ENCODE measurements at regions of chr16 and their contacts with region 1.

Region 1: DNA sequence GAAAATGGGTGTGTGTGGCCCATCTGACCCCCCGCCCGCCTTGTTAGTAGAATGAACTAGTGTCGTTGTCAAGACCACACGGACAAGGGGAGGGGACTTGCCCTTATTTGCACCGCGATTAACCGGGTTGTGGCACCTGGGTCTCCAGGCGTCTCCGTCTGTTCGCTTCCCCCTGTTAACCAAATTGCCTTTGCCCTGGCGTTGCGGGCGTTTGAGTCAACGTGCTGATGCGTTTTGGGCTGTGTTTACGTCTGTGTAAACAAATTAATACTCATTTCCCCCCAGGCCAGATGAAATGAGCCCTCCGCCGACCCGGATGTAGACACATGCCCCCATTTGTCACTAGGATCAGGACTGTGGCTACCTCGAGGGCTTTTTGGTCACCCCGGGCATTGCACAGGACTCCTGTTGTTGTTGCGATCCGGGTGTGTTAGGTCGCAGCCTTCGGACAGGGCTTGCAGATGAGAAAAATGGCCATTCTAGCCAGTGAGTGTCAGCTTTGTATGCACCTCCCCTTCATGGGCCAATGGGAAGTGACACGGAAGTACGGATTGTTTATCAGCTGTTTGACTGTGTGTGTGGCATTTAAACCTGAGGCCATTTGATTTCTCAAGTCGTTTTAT is 906 bp downstream of the RBL2 start:
- DNase-seq: peak; percentile 81
- ATAC-seq: peak; percentile 77
- H3K4me3 Mint-ChIP-seq: peak overlapping the region; percentile 96
- H3K27ac Mint-ChIP-seq: peak overlapping the region; percentile 95
- H3K4me1 Mint-ChIP-seq: peaks cover 45% of the 10 kb centered on the region
- H3K27me3 Mint-ChIP-seq: no peaks in the 10 kb centered on the region

Region 2: GRCh38 chr16:53449632-53450517 is 14.7 kb after region 1 on chr16:
- CTCF ChIA-PET with region 1: interaction called, 37 read pairs
- POLR2A ChIA-PET with region 1: interaction called, 101 read pairs
- DNase-seq: no peak
- ATAC-seq: no peak
- H3K4me3 Mint-ChIP-seq: peak overlapping the region; percentile 67
- H3K27ac Mint-ChIP-seq: peak overlapping the region; percentile 72
- H3K4me1 Mint-ChIP-seq: peaks cover 57% of the 10 kb centered on the region
- H3K27me3 Mint-ChIP-seq: no peaks in the 10 kb centered on the region

Region 3: DNA sequence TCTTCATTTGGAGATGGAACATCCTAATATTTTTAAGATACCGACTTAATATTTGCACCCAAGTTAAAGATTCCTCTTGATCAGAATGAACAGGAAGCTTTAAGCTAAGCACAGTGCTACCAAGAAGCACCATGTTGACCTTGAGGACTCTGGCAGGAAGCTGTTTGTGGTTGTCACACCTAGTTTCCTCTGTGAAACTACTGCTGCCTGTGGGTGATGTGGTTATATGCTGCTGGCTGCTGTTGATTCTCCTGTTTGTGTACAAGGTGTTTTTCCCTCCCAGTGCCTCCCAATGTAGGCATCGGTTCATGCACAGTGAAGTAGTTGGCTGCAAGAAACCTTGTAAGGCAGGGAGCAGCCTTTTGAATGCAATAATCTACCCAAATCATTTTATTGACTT is 22.5 kb after region 1 on chr16:
- CTCF ChIA-PET with region 1: interaction called, 26 read pairs
- POLR2A ChIA-PET with region 1: interaction called, 101 read pairs
- DNase-seq: peak; percentile 91
- ATAC-seq: peak; percentile 86
- H3K4me3 Mint-ChIP-seq: peak overlapping the region; percentile 78
- H3K27ac Mint-ChIP-seq: peak overlapping the region; percentile 94
- H3K4me1 Mint-ChIP-seq: peaks cover 87% of the 10 kb centered on the region
- H3K27me3 Mint-ChIP-seq: no peaks in the 10 kb centered on the region